Endothelial cell of umbilical vein (primary cell): ENCODE measurements at regions of chr11 and their contacts with region 1.

Region 1: GRCh38 chr11:120235024-120235861 is 4.7 kb upstream of the POU2F3 start:
- DNase-seq: peak; percentile 56
- H3K4me3 ChIP-seq: no peak overlapping the region
- H3K27ac ChIP-seq: no peak overlapping the region
- H3K4me1 ChIP-seq: no peaks in the 10 kb centered on the region
- H3K27me3 ChIP-seq: peaks cover 19% of the 10 kb centered on the region in 2 experiments
- CTCF ChIP-seq: peak; percentile 77 to 79
- POLR2A ChIP-seq: no peak

Region 2: GRCh38 chr11:120248551-120249278 is 13.5 kb after region 1 on chr11:
- CTCF ChIA-PET with region 1: interaction called, 18 read pairs
- POLR2A ChIA-PET with region 1: no interaction called
- dilution Hi-C with region 1: no loop called
- intact Hi-C with region 1: no loop called
- DNase-seq: no peak
- H3K4me3 ChIP-seq: no peak overlapping the region
- H3K27ac ChIP-seq: no peak overlapping the region
- H3K4me1 ChIP-seq: peaks cover 4% of the 10 kb centered on the region
- H3K27me3 ChIP-seq: peaks cover 26 to 37% of the 10 kb centered on the region in 2 experiments
- CTCF ChIP-seq: no peak
- POLR2A ChIP-seq: no peak

Region 3: GRCh38 chr11:120400564-120401364 is 165.5 kb after region 1 on chr11:
- CTCF ChIA-PET with region 1: no interaction called
- POLR2A ChIA-PET with region 1: no interaction called
- dilution Hi-C with region 1: no loop called
- intact Hi-C with region 1: no loop called
- DNase-seq: peak; percentile 93
- H3K4me3 ChIP-seq: peak overlapping the region in 2 of 3 experiments; percentile 16 to 73
- H3K27ac ChIP-seq: peak overlapping the region; percentile 78
- H3K4me1 ChIP-seq: peaks cover 36% of the 10 kb centered on the region
- H3K27me3 ChIP-seq: no peaks in the 10 kb centered on the region
- CTCF ChIP-seq: no peak
- POLR2A ChIP-seq: no peak

Region 4: GRCh38 chr11:120952461-120953434 is 717.5 kb after region 1 on chr11:
- CTCF ChIA-PET with region 1: interaction called, 6 read pairs
- POLR2A ChIA-PET with region 1: no interaction called
- dilution Hi-C with region 1: no loop called
- intact Hi-C with region 1: loop called (anchors 2 kb)
- DNase-seq: peak; percentile 65
- H3K4me3 ChIP-seq: no peak overlapping the region
- H3K27ac ChIP-seq: no peak overlapping the region
- H3K4me1 ChIP-seq: no peaks in the 10 kb centered on the region
- H3K27me3 ChIP-seq: no peaks in the 10 kb centered on the region
- CTCF ChIP-seq: peak; percentile 39 to 77
- POLR2A ChIP-seq: no peak